Activated CD4-positive, alpha-beta T cell treated with anti-CD3 and anti-CD28 coated beads for 36 hours (primary cell): ENCODE measurements at regions of chrX and their contacts with region 1.

Region 1: GRCh38 chrX:24169211-24169610 is 19.7 kb downstream of the ZFX start:
- DNase-seq: no peak
- ATAC-seq: peak; percentile 59
- H3K4me3 Mint-ChIP-seq: no peak overlapping the region
- H3K27ac Mint-ChIP-seq: peak overlapping the region; percentile 90
- H3K4me1 Mint-ChIP-seq: peaks cover 60% of the 10 kb centered on the region
- H3K27me3 Mint-ChIP-seq: no peaks in the 10 kb centered on the region

Region 2: DNA sequence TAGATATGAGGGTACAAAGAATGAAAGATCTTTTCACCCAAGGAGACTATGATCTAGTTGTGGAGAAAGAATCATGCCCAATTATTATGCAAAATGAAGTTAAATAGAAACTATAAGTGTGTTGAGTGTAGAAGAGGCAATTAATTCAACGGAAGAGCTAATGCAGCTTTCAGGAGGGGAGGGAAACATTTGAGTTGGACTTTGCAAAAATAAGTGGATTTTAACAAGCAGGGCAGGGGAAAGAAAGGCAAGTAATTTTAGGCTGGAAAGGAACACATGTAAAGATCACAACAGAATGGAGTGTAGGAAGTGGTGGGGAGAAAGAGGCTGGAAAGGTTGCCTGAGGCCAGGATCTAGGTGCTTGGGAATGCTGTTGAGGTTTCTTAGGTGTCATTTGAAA is 186.3 kb before region 1 on chrX:
- CTCF ChIA-PET with region 1: no interaction called
- POLR2A ChIA-PET with region 1: no interaction called
- intact Hi-C with region 1: no loop called
- DNase-seq: no peak
- ATAC-seq: no peak
- H3K4me3 Mint-ChIP-seq: no peak overlapping the region
- H3K27ac Mint-ChIP-seq: no peak overlapping the region
- H3K4me1 Mint-ChIP-seq: peaks cover 4% of the 10 kb centered on the region
- H3K27me3 Mint-ChIP-seq: no peaks in the 10 kb centered on the region

Region 3: GRCh38 chrX:24204331-24204730 is 35.1 kb after region 1 on chrX:
- CTCF ChIA-PET with region 1: no interaction called
- POLR2A ChIA-PET with region 1: no interaction called
- intact Hi-C with region 1: loop called in 1 of 2 experiments (anchors 5 kb)
- DNase-seq: no peak
- ATAC-seq: peak; percentile 53
- H3K4me3 Mint-ChIP-seq: no peak overlapping the region
- H3K27ac Mint-ChIP-seq: peak overlapping the region; percentile 19
- H3K4me1 Mint-ChIP-seq: peaks cover 43% of the 10 kb centered on the region
- H3K27me3 Mint-ChIP-seq: no peaks in the 10 kb centered on the region